Activated T-helper 1 cell treated with anti-CD3 and anti-CD28 coated beads, Interleukin-12 subunit alpha, Interleukin-12 subunit beta, Interleukin-2, Interleukin-4 antibody, amounts not matched to agents 30 ng/mL and 10 ng/mL and 1 ng/mL, durations not matched to agents 14 hours and 24 hours and 36 hours (primary cell): ENCODE measurements at regions of chr11 and their contacts with region 1.

Region 1: DNA sequence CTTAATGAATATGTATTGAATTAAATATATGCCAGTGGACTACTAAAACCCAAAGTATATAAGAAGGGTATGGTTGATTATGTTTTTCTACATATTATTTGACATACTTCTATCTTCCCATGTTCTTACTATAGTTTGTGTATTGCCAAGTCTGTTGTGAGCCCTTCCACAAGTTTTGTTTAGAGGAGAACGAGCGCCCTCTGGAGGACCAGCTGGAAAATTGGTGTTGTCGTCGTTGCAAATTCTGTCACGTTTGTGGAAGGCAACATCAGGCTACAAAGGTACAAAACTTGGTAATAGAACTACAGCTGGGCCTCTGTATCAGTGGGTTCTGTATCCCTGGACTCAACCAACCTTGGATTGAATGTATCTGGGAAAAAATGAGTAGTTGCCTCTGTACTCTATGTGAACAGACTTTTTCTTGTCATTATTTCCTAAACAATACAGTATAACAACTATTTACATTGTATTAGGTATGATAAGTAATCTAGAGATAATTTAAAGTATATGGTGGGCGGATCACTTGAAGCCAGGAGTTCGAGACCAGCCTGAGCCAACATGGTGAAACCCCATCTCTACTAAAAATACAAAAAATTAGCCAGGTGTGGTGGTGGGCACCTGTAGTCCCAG is 38.7 kb upstream of the TTC36 start:
- DNase-seq: peak; percentile 64
- H3K4me3 Mint-ChIP-seq: no peak overlapping the region
- H3K27ac Mint-ChIP-seq: no peak overlapping the region
- H3K4me1 Mint-ChIP-seq: peaks cover 7% of the 10 kb centered on the region
- H3K27me3 Mint-ChIP-seq: no peaks in the 10 kb centered on the region

Region 2: DNA sequence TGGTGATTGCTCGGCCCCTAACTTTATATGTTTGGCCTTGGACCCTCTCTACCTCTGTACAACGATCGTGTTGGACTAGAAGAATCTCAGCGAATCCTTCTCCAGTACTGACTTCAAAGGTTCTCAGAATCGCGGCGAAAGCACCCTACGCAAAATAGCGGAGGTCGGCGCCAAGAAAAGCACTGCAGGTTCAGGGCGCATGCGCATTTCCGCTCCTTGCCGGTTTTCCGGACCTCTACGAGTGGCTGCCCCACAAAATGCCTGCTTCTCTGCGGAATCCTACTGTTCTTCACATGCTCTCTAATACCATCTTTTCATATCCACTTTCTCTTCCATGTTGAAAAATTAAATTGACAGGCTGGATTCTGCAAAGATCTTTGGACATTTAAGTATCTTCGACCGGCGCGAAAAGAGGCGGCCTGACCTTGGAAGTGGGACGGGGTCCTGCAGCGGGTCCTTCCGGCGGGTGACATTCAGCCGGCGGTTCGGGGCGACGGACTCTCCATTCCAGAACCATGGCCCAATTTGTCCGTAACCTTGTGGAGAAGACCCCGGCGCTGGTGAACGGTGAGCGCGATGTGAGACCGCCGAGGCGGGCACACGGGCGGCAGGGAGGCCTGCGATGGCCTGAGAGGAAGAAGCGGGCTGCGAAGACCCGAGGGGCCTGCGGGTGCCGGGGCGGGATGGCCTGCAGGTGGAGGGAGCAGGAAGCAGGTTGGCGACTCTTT is 87.3 kb before region 1 on chr11 and contains the start of gene ATP5MG:
- intact Hi-C with region 1: loop called (anchors 1 kb)
- DNase-seq: peak; percentile 87
- H3K4me3 Mint-ChIP-seq: peak within 1 kb of the TSS; percentile 93
- H3K27ac Mint-ChIP-seq: peak within 1 kb of the TSS; percentile 96
- H3K4me1 Mint-ChIP-seq: peaks cover 68% of the 10 kb centered on the region
- H3K27me3 Mint-ChIP-seq: no peaks in the 10 kb centered on the region
- total RNA-seq, gene ATP5MG: 205 and 216 TPM in 2 replicates

Region 3: GRCh38 chr11:118415739-118416284 is 72.8 kb before region 1 on chr11:
- intact Hi-C with region 1: loop called (anchors 1 kb)
- DNase-seq: peak; percentile 14
- H3K4me3 Mint-ChIP-seq: no peak overlapping the region
- H3K27ac Mint-ChIP-seq: no peak overlapping the region
- H3K4me1 Mint-ChIP-seq: no peaks in the 10 kb centered on the region
- H3K27me3 Mint-ChIP-seq: no peaks in the 10 kb centered on the region

Region 4: GRCh38 chr11:118530408-118531339 is 42.1 kb after region 1 on chr11 and contains the start of gene TMEM25:
- intact Hi-C with region 1: loop called (anchors 5 kb)
- DNase-seq: peak; percentile 71
- H3K4me3 Mint-ChIP-seq: peak within 1 kb of the TSS; percentile 89
- H3K27ac Mint-ChIP-seq: peak within 1 kb of the TSS; percentile 88
- H3K4me1 Mint-ChIP-seq: peaks cover 21% of the 10 kb centered on the region
- H3K27me3 Mint-ChIP-seq: no peaks in the 10 kb centered on the region
- total RNA-seq, gene TMEM25: 13.6 and 15.0 TPM in 2 replicates